Upper lobe of right lung (tissue), 1 donor: ENCODE measurements at regions of chr12 and their contacts with region 1.

Region 1: GRCh38 chr12:76790564-76791552 is 26.9 kb downstream of the ZDHHC17 start:
- DNase-seq: no peak
- ATAC-seq: peak; percentile 53
- H3K4me3 ChIP-seq: no peak overlapping the region
- H3K27ac ChIP-seq: no peak overlapping the region
- H3K4me1 ChIP-seq: peaks cover 4% of the 10 kb centered on the region
- H3K27me3 ChIP-seq: no peaks in the 10 kb centered on the region
- CTCF ChIP-seq: peak; percentile 68

Region 2: GRCh38 chr12:76621582-76622024 is 169.3 kb before region 1 on chr12:
- intact Hi-C with region 1: loop called (anchors 5 kb)
- DNase-seq: no peak
- ATAC-seq: peak; percentile 96
- H3K4me3 ChIP-seq: no peak overlapping the region
- H3K27ac ChIP-seq: no peak overlapping the region
- H3K4me1 ChIP-seq: peaks cover 3% of the 10 kb centered on the region
- H3K27me3 ChIP-seq: no peaks in the 10 kb centered on the region
- CTCF ChIP-seq: peak; percentile 97